Esophagus muscularis mucosa (tissue), 4 donors: ENCODE measurements at regions of chr12 and their contacts with region 1.

Region 1: DNA sequence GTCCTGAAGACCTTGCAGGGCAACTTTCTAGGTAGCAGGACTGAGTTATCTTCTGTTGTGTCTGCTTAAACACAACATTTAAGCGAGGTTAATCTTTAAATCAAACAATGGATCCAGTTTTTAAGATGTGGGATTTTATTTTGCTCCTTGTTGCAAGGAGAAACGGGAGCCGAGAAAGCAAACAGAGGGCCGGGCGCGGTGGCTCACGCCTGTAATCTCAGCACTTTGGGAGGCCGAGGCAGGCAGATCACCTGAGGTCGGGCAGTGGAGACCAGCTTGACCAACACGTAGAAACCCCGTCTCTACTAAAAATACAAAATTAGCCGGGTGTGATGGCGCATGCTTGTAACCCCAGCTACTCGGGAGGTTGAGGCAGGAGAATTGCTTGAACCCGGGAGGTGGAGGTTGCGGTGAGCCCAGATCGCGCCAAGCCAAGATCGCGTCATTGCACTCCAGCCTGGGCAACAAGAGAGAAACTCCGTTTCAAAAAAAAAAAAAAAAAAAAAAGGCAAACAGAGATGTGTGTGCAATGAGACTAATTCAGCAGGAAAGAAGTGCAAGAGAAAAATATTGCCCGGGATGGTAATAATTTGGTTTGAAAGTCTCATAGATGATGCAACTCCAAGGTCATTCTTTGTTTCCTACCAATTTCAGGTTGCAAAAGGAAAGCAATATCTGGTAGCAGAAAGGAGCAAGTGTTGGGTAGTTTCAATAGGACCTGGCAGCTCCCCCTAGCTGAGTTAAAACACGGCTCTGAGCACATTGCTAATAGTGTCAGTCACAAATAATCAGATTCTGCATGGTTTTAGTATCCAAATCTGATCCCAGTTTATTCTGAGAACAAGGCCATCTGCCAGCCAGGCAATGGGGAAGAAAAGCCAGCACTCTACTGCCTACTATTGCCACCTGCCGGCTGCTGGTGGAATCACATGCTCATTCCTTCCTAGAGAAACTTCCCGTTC is 141.4 kb downstream of the PPM1H start:
- DNase-seq: peak; percentile 97
- H3K4me3 ChIP-seq: no peak overlapping the region
- H3K27ac ChIP-seq: peak overlapping the region in 1 of 4 donors; percentile 9
- H3K4me1 ChIP-seq: peaks cover 8 to 19% (median 9%) of the 10 kb centered on the region in 4 donors
- H3K27me3 ChIP-seq: no peaks in the 10 kb centered on the region
- CTCF ChIP-seq: peak; percentile 96 to 98 (median 96)
- EP300 ChIP-seq: no peak
- POLR2A ChIP-seq: no peak

Region 2: DNA sequence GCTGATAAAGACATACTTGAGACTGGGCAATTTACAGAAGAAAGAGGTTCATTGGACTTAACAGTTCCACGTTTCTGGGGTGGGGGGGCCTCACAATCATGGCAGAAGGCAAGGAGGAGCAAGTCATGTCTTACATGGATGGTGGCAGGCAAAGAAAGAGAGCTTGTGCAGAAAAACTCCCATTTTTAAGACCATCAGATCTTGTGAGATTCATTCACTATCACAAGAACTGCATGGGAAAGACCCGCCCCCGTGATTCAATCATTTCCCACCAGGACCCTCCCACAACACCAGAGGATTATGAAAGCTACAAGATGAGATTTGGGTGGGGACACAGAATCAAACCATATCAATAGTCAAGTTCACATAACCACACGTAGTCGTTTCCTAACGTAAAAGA is 447.9 kb before region 1 on chr12:
- intact Hi-C with region 1: no loop called
- DNase-seq: no peak
- H3K4me3 ChIP-seq: no peak overlapping the region
- H3K27ac ChIP-seq: no peak overlapping the region
- H3K4me1 ChIP-seq: no peaks in the 10 kb centered on the region
- H3K27me3 ChIP-seq: no peaks in the 10 kb centered on the region
- CTCF ChIP-seq: no peak
- EP300 ChIP-seq: no peak
- POLR2A ChIP-seq: no peak

Region 3: DNA sequence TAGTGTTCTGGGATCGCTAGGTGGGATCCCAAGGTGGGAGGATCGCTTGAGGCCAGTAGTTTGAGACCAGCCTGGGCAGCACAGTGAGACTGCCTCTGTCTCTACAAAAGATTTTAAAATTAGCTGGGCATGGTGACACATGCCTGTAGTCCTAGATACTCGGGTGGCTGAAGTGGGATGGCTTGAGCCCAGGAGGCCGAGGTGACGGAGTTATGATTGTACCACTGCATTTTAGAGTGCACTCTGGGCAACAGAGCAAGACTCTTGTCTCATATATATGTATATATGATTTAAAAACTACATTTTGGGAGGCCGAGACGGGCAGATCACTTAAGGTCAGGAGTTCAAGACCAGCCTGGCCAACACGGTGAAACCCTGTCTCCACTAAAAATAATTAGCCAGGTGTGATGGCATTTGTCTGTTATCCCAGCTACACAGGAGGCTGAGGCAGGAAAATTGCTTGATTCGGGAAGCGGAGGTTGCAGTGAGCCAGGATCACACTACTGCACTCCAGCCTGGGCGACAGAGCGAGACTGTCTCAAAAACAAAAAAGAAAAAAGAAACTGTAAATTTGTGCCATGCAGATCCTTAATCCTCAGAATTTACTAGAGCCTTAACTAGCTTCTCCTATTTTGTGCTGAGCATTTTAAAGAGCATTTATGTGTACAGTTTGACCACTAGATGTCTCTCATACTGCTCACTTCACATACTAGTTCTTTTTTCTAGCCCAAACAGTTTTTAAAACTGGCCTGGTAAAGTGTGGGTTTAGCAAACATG is 212.1 kb before region 1 on chr12:
- intact Hi-C with region 1: loop called (anchors 2 kb)
- DNase-seq: no peak
- H3K4me3 ChIP-seq: no peak overlapping the region
- H3K27ac ChIP-seq: no peak overlapping the region
- H3K4me1 ChIP-seq: no peaks in the 10 kb centered on the region
- H3K27me3 ChIP-seq: no peaks in the 10 kb centered on the region
- CTCF ChIP-seq: peak; percentile 56 to 71 (median 57)
- EP300 ChIP-seq: no peak
- POLR2A ChIP-seq: no peak

Region 4: DNA sequence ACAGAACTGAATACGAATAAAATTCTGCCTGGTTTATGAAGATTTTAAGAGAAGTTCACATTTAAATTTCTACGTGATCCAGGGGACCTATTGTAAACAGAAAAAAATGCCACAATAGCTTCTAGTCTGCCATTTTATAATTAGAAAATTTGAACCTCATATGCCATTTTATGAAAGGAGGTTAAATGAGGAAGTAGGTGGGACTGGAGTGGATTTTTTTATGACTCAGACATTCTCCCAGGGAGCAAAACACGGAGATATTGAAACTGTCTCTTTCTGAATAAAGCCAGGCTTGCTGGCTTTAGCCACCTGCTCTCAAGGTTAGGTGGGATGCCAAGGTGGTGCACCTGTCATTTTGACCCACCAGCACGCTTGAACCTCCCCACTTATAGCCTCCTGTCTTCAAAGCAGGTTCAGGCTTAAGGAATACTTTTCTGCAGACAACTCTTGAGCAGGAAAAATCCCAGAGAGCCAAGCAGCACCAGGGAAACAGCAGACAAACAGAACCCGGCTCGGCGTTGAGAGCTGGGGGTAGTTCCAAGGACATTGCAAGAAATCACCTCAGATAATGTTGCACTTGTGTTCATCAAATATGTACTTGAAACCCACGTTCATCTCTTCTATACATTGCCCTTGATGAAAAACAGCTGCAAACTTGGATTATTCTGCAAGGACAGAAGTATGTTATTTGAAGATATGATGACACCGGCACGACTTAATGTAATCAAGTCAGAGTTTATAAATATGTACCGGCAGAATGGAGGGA is 62.3 kb before region 1 on chr12:
- intact Hi-C with region 1: no loop called
- DNase-seq: no peak
- H3K4me3 ChIP-seq: peak overlapping the region in 3 of 4 donors; percentile 18 to 35 (median 26)
- H3K27ac ChIP-seq: peak overlapping the region; percentile 40 to 66 (median 47)
- H3K4me1 ChIP-seq: peaks cover 26 to 50% (median 44%) of the 10 kb centered on the region in 4 donors
- H3K27me3 ChIP-seq: no peaks in the 10 kb centered on the region
- CTCF ChIP-seq: no peak
- EP300 ChIP-seq: no peak
- POLR2A ChIP-seq: no peak

Region 5: GRCh38 chr12:62900686-62901272 is 107.2 kb after region 1 on chr12:
- intact Hi-C with region 1: no loop called
- DNase-seq: no peak
- H3K4me3 ChIP-seq: no peak overlapping the region
- H3K27ac ChIP-seq: no peak overlapping the region
- H3K4me1 ChIP-seq: peaks cover 0 to 6% (median 0%) of the 10 kb centered on the region in 4 donors
- H3K27me3 ChIP-seq: no peaks in the 10 kb centered on the region
- CTCF ChIP-seq: no peak
- EP300 ChIP-seq: no peak
- POLR2A ChIP-seq: no peak